ENCODE measurements at regions of chr3 and their contacts with region 1.

Region 1: DNA sequence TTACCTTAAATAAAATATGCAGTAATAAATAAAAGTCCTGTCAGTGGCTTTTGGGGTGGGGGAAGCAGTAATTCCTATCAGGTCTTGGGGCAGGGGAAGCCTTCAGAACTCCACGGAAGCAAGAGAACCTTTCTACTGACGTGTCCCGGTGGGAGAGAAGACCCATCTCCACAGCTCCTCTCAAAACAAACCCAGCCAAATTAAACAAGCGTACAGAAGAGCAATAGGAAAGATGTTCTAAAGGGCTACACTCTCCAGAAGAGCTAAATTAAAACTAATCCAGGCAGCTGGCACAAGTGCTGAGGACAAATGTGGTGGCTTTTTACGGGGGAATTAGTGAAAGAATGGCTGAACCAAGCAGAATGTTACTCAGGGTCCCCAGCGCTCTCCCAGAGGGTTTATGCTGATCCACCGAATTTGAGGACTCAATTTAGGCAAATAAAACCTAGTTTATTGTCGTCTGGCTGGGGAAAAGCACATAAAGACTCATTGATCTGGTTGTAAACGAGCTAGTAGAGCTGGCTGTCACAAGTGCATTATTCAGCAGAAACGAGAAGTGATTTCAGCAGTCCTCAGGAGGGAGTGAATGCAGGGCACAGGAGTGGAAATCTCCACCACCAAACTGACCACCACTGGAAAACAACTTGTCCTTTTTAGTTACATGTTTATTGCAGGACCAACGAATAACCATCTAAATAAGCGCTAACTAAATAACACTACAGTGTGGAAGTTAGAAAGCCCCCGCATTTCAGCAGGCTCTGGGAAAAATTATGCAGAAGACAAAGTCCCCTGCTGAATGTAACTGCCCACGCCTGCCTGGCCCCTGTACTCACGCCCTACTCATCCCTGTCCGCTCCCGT is 13.5 kb downstream of the BFSP2 start:
- DNase-seq: no peak
- H3K4me3 ChIP-seq: peak overlapping the region; percentile 2; the same call in 1 of the 2 replicates
- H3K27me3 ChIP-seq: no peaks in the 10 kb centered on the region
- CTCF ChIP-seq: no peak

Region 2: GRCh38 chr3:132911736-132912414 is 501.5 kb before region 1 on chr3:
- CTCF ChIA-PET with region 1: no interaction called
- POLR2A ChIA-PET with region 1: interaction called, 15 read pairs
- DNase-seq: no peak
- H3K4me3 ChIP-seq: no peak overlapping the region
- H3K27me3 ChIP-seq: no peaks in the 10 kb centered on the region
- CTCF ChIP-seq: no peak

Region 3: GRCh38 chr3:133192363-133192945 is 220.9 kb before region 1 on chr3:
- CTCF ChIA-PET with region 1: no interaction called
- POLR2A ChIA-PET with region 1: no interaction called
- DNase-seq: no peak
- H3K4me3 ChIP-seq: no peak overlapping the region
- H3K27me3 ChIP-seq: no peaks in the 10 kb centered on the region
- CTCF ChIP-seq: no peak

Region 4: DNA sequence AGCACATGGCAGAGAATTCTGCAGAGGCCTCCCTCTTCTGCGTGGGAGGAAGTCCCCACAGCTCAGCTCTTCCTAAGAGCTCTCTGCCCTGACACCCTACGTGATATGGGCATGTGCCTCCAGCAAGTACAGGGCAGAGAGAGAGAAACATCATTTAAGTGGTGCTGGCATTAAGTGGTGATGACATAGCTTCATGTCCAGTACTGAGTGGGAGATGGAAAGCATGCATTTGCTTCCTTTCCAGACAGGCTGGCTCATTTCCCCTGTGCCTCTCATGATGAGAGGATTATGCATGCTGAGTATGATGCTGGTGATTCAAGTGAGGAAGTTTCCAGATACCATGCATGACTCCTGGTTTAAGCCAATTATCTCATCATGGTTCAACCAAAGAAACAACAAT is 13.3 kb after region 1 on chr3:
- CTCF ChIA-PET with region 1: interaction called, 21 read pairs
- POLR2A ChIA-PET with region 1: no interaction called
- DNase-seq: no peak
- H3K4me3 ChIP-seq: no peak overlapping the region
- H3K27me3 ChIP-seq: peaks cover 4% of the 10 kb centered on the region
- CTCF ChIP-seq: no peak

Measured in BJ (cell line).